Common myeloid progenitor, CD34-positive (primary cell): ENCODE measurements at regions of chr12 and their contacts with region 1.

Region 1: DNA sequence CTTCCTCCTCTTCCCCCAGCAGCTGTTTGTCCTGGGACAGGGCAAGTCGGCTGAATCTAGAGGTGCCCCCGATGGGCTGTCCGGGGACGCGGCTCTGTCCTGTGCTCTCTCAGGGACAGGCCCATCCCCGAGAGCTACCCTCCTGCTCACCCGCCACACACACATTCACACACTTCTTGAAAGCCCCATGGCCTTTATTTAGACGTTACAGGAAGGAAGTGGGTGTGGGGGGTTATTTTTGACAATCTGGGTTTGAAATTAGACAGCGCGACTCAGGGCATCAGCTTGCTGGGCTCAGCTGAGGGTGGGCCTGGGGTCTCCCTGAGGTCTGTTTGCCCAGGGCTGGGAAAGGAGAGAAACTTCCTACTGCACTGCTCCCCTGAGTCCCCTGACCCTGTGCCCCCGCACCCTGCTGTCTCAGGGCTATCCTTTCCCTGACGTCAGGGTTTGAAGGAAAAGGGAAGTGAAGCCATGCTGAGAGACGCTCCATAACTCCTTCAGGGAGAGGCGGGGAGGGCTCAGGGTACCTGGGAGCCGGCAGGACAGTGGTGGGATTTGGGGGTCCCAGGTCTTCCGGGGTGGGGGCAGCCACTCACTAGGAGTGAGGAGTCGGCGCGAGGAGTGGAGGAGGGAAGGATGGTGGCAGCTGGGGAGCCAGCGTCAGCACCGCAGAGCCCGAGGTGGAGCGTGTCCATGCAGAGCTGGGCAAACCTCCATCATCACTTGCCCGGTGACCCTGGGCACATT is 8.1 kb downstream of the PTPN6 start:
- DNase-seq: peak in 2 of 3 donors; percentile 90 to 93
- H3K4me3 ChIP-seq: peak overlapping the region in 4 of 7 experiments; percentile 46 to 64 (median 55)
- H3K27ac ChIP-seq: peak overlapping the region; percentile 46 to 77
- H3K4me1 ChIP-seq: peaks cover 12 to 92% (median 91%) of the 10 kb centered on the region in 4 experiments
- H3K27me3 ChIP-seq: no peaks in the 10 kb centered on the region

Region 2: GRCh38 chr12:6944381-6945186 is 14.6 kb before region 1 on chr12:
- CTCF ChIA-PET with region 1: interaction called, 441 read pairs
- POLR2A ChIA-PET with region 1: interaction called, 42 read pairs
- DNase-seq: peak; percentile 90 to 94 (median 93)
- H3K4me3 ChIP-seq: peak overlapping the region; percentile 41 to 89 (median 71)
- H3K27ac ChIP-seq: peak overlapping the region; percentile 97 to 99
- H3K4me1 ChIP-seq: peaks cover 3 to 53% (median 48%) of the 10 kb centered on the region in 4 experiments
- H3K27me3 ChIP-seq: no peaks in the 10 kb centered on the region